ENCODE measurements at regions of chr17 and their contacts with region 1.

Region 1: DNA sequence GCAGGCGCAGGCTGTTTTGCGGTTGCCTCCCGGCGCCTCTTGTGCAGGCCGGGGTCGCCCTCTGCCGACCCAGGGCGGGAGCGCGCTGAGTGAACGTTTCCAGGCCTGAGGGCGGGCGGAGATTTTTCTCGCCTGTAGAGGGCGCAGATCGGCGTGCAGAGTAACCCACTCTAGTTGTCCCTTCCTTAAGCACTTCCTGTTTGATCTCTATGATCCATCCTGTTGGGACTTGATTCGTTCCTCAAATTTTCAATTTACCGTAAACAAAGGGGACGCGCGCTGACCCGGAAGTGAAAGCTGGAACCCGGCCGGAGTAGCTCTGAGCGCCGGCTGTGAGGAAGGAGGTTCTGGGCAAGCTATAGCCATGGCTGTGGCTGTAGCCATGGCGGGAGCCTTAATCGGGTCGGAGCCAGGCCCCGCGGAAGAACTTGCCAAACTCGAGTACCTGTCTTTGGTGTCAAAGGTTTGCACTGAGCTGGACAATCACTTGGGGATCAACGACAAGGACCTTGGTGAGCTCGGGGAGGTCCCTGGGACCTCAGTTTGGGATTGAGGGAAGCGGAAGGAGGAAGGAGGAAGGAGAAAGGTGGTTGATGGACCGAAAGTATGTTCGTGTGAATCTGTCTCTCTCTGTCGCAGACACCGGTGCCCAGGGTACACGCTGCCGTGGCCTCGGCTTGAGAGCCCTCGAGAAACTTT is at the start of gene DHX8:
- DNase-seq: peak; percentile 97 to 99 (median 97)
- H3K4me3 ChIP-seq: peak within 1 kb of the TSS in 3 of 4 donors; percentile 65 to 84 (median 75)
- H3K27ac ChIP-seq: peak within 1 kb of the TSS; percentile 23 to 87 (median 71)
- H3K4me1 ChIP-seq: peaks cover 11 to 37% of the 10 kb centered on the region in 2 donors
- H3K27me3 ChIP-seq: no peaks in the 10 kb centered on the region
- CTCF ChIP-seq: peak; percentile 100
- POLR2A ChIP-seq: peak; percentile 33 to 76
- total RNA-seq, gene DHX8: 15.2 to 43.6 (median 35.4) TPM

Region 2: GRCh38 chr17:43393944-43394482 is 89.8 kb before region 1 on chr17:
- intact Hi-C with region 1: loop called (anchors 2 kb)
- DNase-seq: peak; percentile 91 to 98 (median 94)
- H3K4me3 ChIP-seq: no peak overlapping the region
- H3K27ac ChIP-seq: peak overlapping the region in 1 of 5 donors; percentile 51
- H3K4me1 ChIP-seq: peaks cover 4 to 16% of the 10 kb centered on the region in 2 donors
- H3K27me3 ChIP-seq: no peaks in the 10 kb centered on the region
- CTCF ChIP-seq: peak; percentile 97 to 99 (median 98)
- POLR2A ChIP-seq: no peak

Measured in adrenal gland (tissue), 19 donors.